PC-3 (cell line): ENCODE measurements at regions of chr7 and their contacts with region 1.

Region 1: DNA sequence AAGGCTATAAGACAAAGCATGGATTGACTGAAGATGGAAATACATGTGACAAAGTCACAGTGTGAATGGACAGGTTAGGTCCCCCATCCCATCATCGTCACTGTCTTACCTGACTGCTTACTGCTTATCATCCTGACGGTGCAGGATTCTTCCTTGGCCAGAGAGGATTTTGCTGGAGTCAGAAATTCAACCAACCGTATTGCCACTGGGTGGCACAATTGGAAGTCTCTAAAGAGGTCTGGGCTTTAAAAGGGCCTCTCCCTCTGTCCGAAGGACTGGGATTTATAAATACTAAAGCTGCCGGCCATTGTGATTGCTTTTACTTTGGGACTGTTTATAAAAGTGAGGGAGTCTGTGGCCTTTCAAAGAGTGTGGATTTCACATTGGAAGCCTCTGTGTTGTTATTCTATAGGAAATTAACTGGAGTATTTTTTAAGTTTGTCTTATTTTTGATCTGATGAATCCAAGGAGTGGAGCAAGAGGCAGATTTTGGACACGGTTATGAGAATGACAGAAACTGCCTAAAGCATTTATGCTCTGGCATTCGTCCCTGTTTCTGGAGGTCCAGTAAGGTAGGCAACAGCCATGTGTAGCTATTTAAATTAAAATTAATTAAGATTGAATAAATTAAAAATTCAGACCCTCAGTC is 113.3 kb upstream of the CREB5 start:
- DNase-seq: peak; percentile 85
- ATAC-seq: peak; percentile 94
- H3K4me3 ChIP-seq: no peak overlapping the region
- H3K27ac ChIP-seq: 0 out of 2 replicates have a peak overlapping the region, but pooled peaks have one; percentile 13
- H3K4me1 ChIP-seq: peaks cover 13% of the 10 kb centered on the region
- H3K27me3 ChIP-seq: no peaks in the 10 kb centered on the region
- CTCF ChIP-seq: peak; percentile 82

Region 2: DNA sequence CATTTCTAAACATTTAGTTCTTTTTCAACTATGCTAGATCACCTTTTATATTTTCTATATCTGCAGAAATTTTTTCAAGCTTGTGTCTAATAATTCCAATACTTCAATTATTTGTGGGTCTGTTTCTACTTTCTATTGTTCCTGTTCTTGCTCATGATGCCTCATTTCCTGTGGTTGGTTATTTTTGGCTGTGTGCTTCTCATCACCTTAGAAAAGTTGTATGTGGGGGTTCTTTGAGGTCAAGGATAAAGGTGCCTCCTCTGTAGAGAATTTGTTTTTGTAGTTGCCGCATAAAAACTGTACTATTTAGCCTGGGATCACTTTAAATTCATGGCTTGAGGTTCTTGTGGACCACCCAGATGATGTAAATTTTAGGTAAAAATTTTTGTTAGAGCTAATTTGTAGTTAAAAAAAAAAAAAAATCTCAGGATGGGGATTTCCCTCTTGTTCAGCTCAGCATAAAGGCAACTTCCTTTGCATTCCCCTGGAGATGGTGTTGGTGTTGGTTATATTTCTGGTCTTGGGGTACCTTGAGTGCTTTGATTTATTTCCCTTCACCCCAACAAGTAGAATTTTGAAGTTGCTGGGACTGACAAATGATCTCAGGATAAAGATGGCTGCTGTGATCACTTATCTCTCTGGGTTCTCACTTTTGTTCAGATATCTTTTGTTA is 91.4 kb before region 1 on chr7:
- CTCF ChIA-PET with region 1: no interaction called
- POLR2A ChIA-PET with region 1: no interaction called
- intact Hi-C with region 1: no loop called
- DNase-seq: peak; percentile 28
- ATAC-seq: no peak; the same call in 1 of the 2 replicates
- H3K4me3 ChIP-seq: no peak overlapping the region
- H3K27ac ChIP-seq: no peak overlapping the region
- H3K4me1 ChIP-seq: no peaks in the 10 kb centered on the region
- H3K27me3 ChIP-seq: no peaks in the 10 kb centered on the region
- CTCF ChIP-seq: no peak

Region 3: GRCh38 chr7:28239823-28240204 is 59.2 kb before region 1 on chr7:
- CTCF ChIA-PET with region 1: no interaction called
- POLR2A ChIA-PET with region 1: no interaction called
- intact Hi-C with region 1: no loop called
- DNase-seq: no peak
- ATAC-seq: no peak
- H3K4me3 ChIP-seq: no peak overlapping the region
- H3K27ac ChIP-seq: no peak overlapping the region
- H3K4me1 ChIP-seq: no peaks in the 10 kb centered on the region
- H3K27me3 ChIP-seq: no peaks in the 10 kb centered on the region
- CTCF ChIP-seq: no peak

Region 4: GRCh38 chr7:28364082-28364481 is 65.1 kb after region 1 on chr7:
- CTCF ChIA-PET with region 1: interaction called, 18 read pairs
- POLR2A ChIA-PET with region 1: no interaction called
- intact Hi-C with region 1: loop called (anchors 1 kb)
- DNase-seq: peak; percentile 50
- ATAC-seq: no peak
- H3K4me3 ChIP-seq: no peak overlapping the region
- H3K27ac ChIP-seq: no peak overlapping the region
- H3K4me1 ChIP-seq: peaks cover 5% of the 10 kb centered on the region
- H3K27me3 ChIP-seq: no peaks in the 10 kb centered on the region
- CTCF ChIP-seq: peak; percentile 62